Activated CD8-positive, alpha-beta T cell treated with anti-CD3 and anti-CD28 coated beads for 36 hours (primary cell): ENCODE measurements at regions of chr3 and their contacts with region 1.

Region 1: GRCh38 chr3:194344012-194344411 is 7.1 kb downstream of the CPN2 start:
- DNase-seq: peak; percentile 84
- ATAC-seq: peak; percentile 79
- H3K4me3 Mint-ChIP-seq: no peak overlapping the region
- H3K27ac Mint-ChIP-seq: no peak overlapping the region
- H3K4me1 Mint-ChIP-seq: no peaks in the 10 kb centered on the region
- H3K27me3 Mint-ChIP-seq: peaks cover 2% of the 10 kb centered on the region
- CTCF ChIP-seq: peak; percentile 89

Region 2: DNA sequence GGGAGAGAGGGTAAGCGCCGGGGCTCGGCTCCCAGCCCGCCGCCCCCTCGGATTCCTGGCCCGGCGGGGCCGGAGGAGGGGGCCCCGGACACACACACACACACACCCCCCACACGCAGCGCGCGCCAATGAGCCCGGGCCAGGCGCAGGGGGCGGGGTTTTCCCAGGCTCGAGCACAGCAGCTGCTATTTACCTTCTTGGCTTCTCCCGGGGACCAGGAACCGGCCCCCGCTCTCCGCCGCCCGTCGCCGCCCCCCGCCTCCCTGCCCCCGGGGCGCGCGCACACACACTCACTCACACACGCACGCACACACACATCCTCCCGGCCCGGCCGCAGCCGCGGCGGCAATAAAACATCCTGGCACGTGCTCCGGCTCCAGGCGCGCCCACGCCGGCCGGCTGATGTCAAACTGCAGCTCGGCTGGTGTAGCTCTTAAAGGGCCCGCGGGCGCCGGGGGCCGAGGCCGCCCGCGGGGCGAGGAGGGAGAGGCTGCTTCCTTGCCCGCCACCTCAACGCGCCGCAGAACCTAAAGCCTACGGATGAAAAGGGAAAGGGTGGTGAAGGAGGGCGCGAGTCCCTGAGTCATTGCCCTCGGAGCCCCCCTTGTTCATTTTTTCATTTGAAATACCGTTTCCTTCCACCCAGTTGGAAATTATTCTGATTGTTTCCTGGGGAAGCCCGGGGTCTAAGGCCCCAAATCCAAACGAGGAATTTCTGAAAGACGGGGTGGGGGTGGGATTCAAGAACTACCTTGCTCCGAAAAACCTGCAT is 209.1 kb before region 1 on chr3:
- CTCF ChIA-PET with region 1: no interaction called
- POLR2A ChIA-PET with region 1: no interaction called
- intact Hi-C with region 1: no loop called
- DNase-seq: peak; percentile 92
- ATAC-seq: peak; percentile 58
- H3K4me3 Mint-ChIP-seq: peak overlapping the region; percentile 63
- H3K27ac Mint-ChIP-seq: peak overlapping the region; percentile 75
- H3K4me1 Mint-ChIP-seq: peaks cover 39% of the 10 kb centered on the region
- H3K27me3 Mint-ChIP-seq: peaks cover 72% of the 10 kb centered on the region
- CTCF ChIP-seq: no peak

Region 3: GRCh38 chr3:194148383-194148782 is 195.6 kb before region 1 on chr3:
- CTCF ChIA-PET with region 1: no interaction called
- POLR2A ChIA-PET with region 1: no interaction called
- intact Hi-C with region 1: no loop called
- DNase-seq: no peak
- ATAC-seq: no peak
- H3K4me3 Mint-ChIP-seq: no peak overlapping the region
- H3K27ac Mint-ChIP-seq: no peak overlapping the region
- H3K4me1 Mint-ChIP-seq: no peaks in the 10 kb centered on the region
- H3K27me3 Mint-ChIP-seq: peaks cover 15% of the 10 kb centered on the region
- CTCF ChIP-seq: no peak

Region 4: GRCh38 chr3:194328053-194328657 is 15.9 kb before region 1 on chr3:
- CTCF ChIA-PET with region 1: interaction called, 69 read pairs
- POLR2A ChIA-PET with region 1: no interaction called
- intact Hi-C with region 1: no loop called
- DNase-seq: peak; percentile 55
- ATAC-seq: peak; percentile 38
- H3K4me3 Mint-ChIP-seq: no peak overlapping the region
- H3K27ac Mint-ChIP-seq: no peak overlapping the region
- H3K4me1 Mint-ChIP-seq: peaks cover 4% of the 10 kb centered on the region
- H3K27me3 Mint-ChIP-seq: peaks cover 17% of the 10 kb centered on the region
- CTCF ChIP-seq: no peak

Region 5: GRCh38 chr3:194353956-194354714 is 10.1 kb after region 1 on chr3:
- CTCF ChIA-PET with region 1: interaction called, 39 read pairs
- POLR2A ChIA-PET with region 1: interaction called, 6 read pairs
- intact Hi-C with region 1: no loop called
- DNase-seq: no peak
- ATAC-seq: no peak
- H3K4me3 Mint-ChIP-seq: no peak overlapping the region
- H3K27ac Mint-ChIP-seq: no peak overlapping the region
- H3K4me1 Mint-ChIP-seq: no peaks in the 10 kb centered on the region
- H3K27me3 Mint-ChIP-seq: no peaks in the 10 kb centered on the region
- CTCF ChIP-seq: no peak

Region 6: GRCh38 chr3:194386642-194387041 is 42.6 kb after region 1 on chr3:
- CTCF ChIA-PET with region 1: interaction called, 11 read pairs
- POLR2A ChIA-PET with region 1: no interaction called
- intact Hi-C with region 1: no loop called
- DNase-seq: no peak
- ATAC-seq: no peak
- H3K4me3 Mint-ChIP-seq: no peak overlapping the region
- H3K27ac Mint-ChIP-seq: no peak overlapping the region
- H3K4me1 Mint-ChIP-seq: no peaks in the 10 kb centered on the region
- H3K27me3 Mint-ChIP-seq: peaks cover 2% of the 10 kb centered on the region
- CTCF ChIP-seq: no peak